Activated CD4-positive, alpha-beta memory T cell treated with anti-CD3 and anti-CD28 coated beads for 36 hours (primary cell): ENCODE measurements at regions of chr4 and their contacts with region 1.

Region 1: GRCh38 chr4:168318266-168318895 is at the start of gene DDX60:
- DNase-seq: peak; percentile 89
- H3K4me3 Mint-ChIP-seq: peak within 1 kb of the TSS; percentile 84
- H3K27ac Mint-ChIP-seq: peak within 1 kb of the TSS; percentile 88
- H3K4me1 Mint-ChIP-seq: peaks cover 32% of the 10 kb centered on the region
- H3K27me3 Mint-ChIP-seq: no peaks in the 10 kb centered on the region
- total RNA-seq, gene DDX60: 24.1 to 28.9 TPM

Region 2: DNA sequence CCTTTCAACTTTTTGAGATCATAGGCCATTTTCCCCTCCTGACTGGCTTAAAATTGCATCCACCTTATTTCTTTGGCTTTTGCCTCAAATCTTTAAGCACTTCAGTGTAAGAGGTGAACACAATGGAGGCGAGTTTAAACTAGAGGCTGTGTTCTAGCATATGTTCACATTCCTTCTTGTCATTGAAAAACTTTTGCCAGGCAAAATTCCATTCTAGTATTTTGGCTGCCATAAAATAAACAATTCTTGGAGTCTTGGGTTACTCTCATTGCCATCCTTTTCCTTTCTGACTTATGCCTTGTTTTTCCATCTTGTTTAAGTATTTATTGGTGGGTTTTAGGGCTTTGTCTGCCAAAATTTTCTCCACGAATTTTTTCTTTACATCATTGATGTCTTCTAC is 363.4 kb before region 1 on chr4:
- CTCF ChIA-PET with region 1: no interaction called
- POLR2A ChIA-PET with region 1: no interaction called
- intact Hi-C with region 1: no loop called
- DNase-seq: no peak
- H3K4me3 Mint-ChIP-seq: no peak overlapping the region
- H3K27ac Mint-ChIP-seq: no peak overlapping the region
- H3K4me1 Mint-ChIP-seq: no peaks in the 10 kb centered on the region
- H3K27me3 Mint-ChIP-seq: no peaks in the 10 kb centered on the region

Region 3: DNA sequence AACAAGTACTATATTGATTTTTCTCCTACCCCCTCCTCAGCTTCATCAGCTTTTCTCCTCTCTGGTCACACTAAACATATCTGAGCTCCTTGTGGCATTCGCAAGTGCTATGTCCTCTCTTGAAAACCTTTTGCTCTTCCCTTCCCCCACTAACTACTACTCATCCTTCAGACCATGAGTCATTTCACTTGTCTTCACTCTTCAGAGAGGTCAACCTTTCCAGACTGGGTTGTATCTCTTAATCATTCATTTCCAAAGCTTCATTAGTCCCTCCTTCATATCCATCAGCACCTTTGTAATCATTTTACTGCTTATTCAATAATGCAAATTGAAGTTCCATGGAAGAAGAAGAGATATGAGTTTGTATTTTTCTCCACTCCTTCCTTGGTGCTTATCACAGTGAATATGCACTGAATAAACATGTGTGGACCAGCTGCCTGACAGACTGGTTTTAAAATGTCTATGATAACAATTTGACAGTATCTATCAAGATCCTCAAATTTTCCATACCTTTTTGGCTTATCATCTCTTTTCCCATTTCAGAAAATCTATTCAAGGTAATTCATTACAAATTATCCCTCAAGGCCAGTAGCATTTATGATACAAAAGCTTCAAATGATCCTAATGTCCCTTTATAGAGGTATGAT is 133.5 kb after region 1 on chr4:
- CTCF ChIA-PET with region 1: no interaction called
- POLR2A ChIA-PET with region 1: no interaction called
- intact Hi-C with region 1: loop called (anchors 2 kb)
- DNase-seq: no peak
- H3K4me3 Mint-ChIP-seq: no peak overlapping the region
- H3K27ac Mint-ChIP-seq: peak overlapping the region; percentile 61
- H3K4me1 Mint-ChIP-seq: peaks cover 30% of the 10 kb centered on the region
- H3K27me3 Mint-ChIP-seq: no peaks in the 10 kb centered on the region

Region 4: GRCh38 chr4:168569066-168569970 is 250.9 kb after region 1 on chr4:
- CTCF ChIA-PET with region 1: no interaction called
- POLR2A ChIA-PET with region 1: no interaction called
- intact Hi-C with region 1: loop called (anchors 1 kb)
- DNase-seq: peak; percentile 40
- H3K4me3 Mint-ChIP-seq: no peak overlapping the region
- H3K27ac Mint-ChIP-seq: no peak overlapping the region
- H3K4me1 Mint-ChIP-seq: peaks cover 12% of the 10 kb centered on the region
- H3K27me3 Mint-ChIP-seq: peaks cover 7% of the 10 kb centered on the region